Endothelial cell of umbilical vein (primary cell): ENCODE measurements at regions of chr11 and their contacts with region 1.

Region 1: GRCh38 chr11:113305440-113306336 is 8.7 kb upstream of the TTC12 start:
- DNase-seq: peak; percentile 60
- H3K4me3 ChIP-seq: no peak overlapping the region
- H3K27ac ChIP-seq: no peak overlapping the region
- H3K4me1 ChIP-seq: no peaks in the 10 kb centered on the region
- H3K27me3 ChIP-seq: peaks cover 2 to 5% of the 10 kb centered on the region in 2 experiments
- CTCF ChIP-seq: peak; percentile 84 to 94
- POLR2A ChIP-seq: no peak

Region 2: DNA sequence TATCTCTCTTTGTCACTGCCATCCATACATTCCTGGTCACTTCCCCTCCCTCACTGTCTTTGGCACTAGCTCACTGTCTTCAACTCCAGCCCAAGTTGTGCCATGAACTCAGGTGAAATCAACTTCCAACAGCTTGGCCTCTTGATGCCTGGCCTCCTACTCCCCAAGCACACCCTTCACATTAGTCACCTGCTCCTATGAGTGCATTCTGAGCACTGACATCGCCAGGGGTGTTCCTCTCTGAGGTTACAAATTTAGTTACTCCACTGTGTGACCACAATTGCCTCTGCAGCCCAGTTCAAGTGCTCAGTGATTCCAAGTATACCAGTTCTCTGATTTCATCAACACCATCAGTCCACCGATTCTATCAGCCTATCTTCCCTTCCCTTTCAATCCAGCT is 158.7 kb after region 1 on chr11:
- CTCF ChIA-PET with region 1: no interaction called
- POLR2A ChIA-PET with region 1: no interaction called
- dilution Hi-C with region 1: no loop called
- intact Hi-C with region 1: no loop called
- DNase-seq: no peak
- H3K4me3 ChIP-seq: no peak overlapping the region
- H3K27ac ChIP-seq: no peak overlapping the region
- H3K4me1 ChIP-seq: no peaks in the 10 kb centered on the region
- H3K27me3 ChIP-seq: no peaks in the 10 kb centered on the region
- CTCF ChIP-seq: no peak
- POLR2A ChIP-seq: no peak

Region 3: GRCh38 chr11:113494021-113494420 is 188.3 kb after region 1 on chr11:
- CTCF ChIA-PET with region 1: interaction called, 14 read pairs
- POLR2A ChIA-PET with region 1: no interaction called
- dilution Hi-C with region 1: no loop called
- intact Hi-C with region 1: no loop called
- DNase-seq: no peak
- H3K4me3 ChIP-seq: no peak overlapping the region
- H3K27ac ChIP-seq: no peak overlapping the region
- H3K4me1 ChIP-seq: no peaks in the 10 kb centered on the region
- H3K27me3 ChIP-seq: no peaks in the 10 kb centered on the region
- CTCF ChIP-seq: no peak
- POLR2A ChIP-seq: no peak

Region 4: GRCh38 chr11:113532697-113533424 is 227.2 kb after region 1 on chr11:
- CTCF ChIA-PET with region 1: interaction called, 67 read pairs
- POLR2A ChIA-PET with region 1: no interaction called
- dilution Hi-C with region 1: no loop called
- intact Hi-C with region 1: loop called (anchors 1 kb)
- DNase-seq: peak; percentile 64
- H3K4me3 ChIP-seq: no peak overlapping the region
- H3K27ac ChIP-seq: no peak overlapping the region
- H3K4me1 ChIP-seq: no peaks in the 10 kb centered on the region
- H3K27me3 ChIP-seq: no peaks in the 10 kb centered on the region
- CTCF ChIP-seq: peak; percentile 75 to 86
- POLR2A ChIP-seq: no peak

Region 5: GRCh38 chr11:113730887-113731726 is 425.4 kb after region 1 on chr11:
- CTCF ChIA-PET with region 1: interaction called, 10 read pairs
- POLR2A ChIA-PET with region 1: no interaction called
- dilution Hi-C with region 1: no loop called
- intact Hi-C with region 1: loop called (anchors 2 kb)
- DNase-seq: peak; percentile 18
- H3K4me3 ChIP-seq: no peak overlapping the region
- H3K27ac ChIP-seq: no peak overlapping the region
- H3K4me1 ChIP-seq: no peaks in the 10 kb centered on the region
- H3K27me3 ChIP-seq: no peaks in the 10 kb centered on the region
- CTCF ChIP-seq: no peak
- POLR2A ChIP-seq: no peak

Region 6: GRCh38 chr11:113796663-113797259 is 491.1 kb after region 1 on chr11:
- CTCF ChIA-PET with region 1: interaction called, 20 read pairs
- POLR2A ChIA-PET with region 1: no interaction called
- dilution Hi-C with region 1: no loop called
- intact Hi-C with region 1: loop called (anchors 1 kb)
- DNase-seq: peak; percentile 49
- H3K4me3 ChIP-seq: no peak overlapping the region
- H3K27ac ChIP-seq: no peak overlapping the region
- H3K4me1 ChIP-seq: no peaks in the 10 kb centered on the region
- H3K27me3 ChIP-seq: no peaks in the 10 kb centered on the region
- CTCF ChIP-seq: peak; percentile 45 to 62
- POLR2A ChIP-seq: no peak